Naive thymus-derived CD4-positive, alpha-beta T cell (primary cell): ENCODE measurements at regions of chr9 and their contacts with region 1.

Region 1: GRCh38 chr9:128067876-128068613 is at the start of gene SLC25A25:
- DNase-seq: peak; percentile 99 to 100 (median 100)
- ATAC-seq: peak; percentile 92
- H3K4me3 ChIP-seq: peak within 1 kb of the TSS; percentile 96
- H3K4me3 Mint-ChIP-seq: peak within 1 kb of the TSS in 8 of 10 donors; percentile 91 to 99 (median 94)
- H3K27ac ChIP-seq: peak within 1 kb of the TSS; percentile 88
- H3K27ac Mint-ChIP-seq: peak within 1 kb of the TSS; percentile 74 to 94 (median 85)
- H3K4me1 ChIP-seq: peaks cover 50 to 54% of the 10 kb centered on the region in 2 donors
- H3K4me1 Mint-ChIP-seq: peaks cover 38 to 69% (median 51%) of the 10 kb centered on the region in 7 donors
- H3K27me3 ChIP-seq: no peaks in the 10 kb centered on the region
- H3K27me3 Mint-ChIP-seq: no peaks in the 10 kb centered on the region
- total RNA-seq, gene SLC25A25: 12.4 to 26.3 (median 15.1) TPM

Region 2: DNA sequence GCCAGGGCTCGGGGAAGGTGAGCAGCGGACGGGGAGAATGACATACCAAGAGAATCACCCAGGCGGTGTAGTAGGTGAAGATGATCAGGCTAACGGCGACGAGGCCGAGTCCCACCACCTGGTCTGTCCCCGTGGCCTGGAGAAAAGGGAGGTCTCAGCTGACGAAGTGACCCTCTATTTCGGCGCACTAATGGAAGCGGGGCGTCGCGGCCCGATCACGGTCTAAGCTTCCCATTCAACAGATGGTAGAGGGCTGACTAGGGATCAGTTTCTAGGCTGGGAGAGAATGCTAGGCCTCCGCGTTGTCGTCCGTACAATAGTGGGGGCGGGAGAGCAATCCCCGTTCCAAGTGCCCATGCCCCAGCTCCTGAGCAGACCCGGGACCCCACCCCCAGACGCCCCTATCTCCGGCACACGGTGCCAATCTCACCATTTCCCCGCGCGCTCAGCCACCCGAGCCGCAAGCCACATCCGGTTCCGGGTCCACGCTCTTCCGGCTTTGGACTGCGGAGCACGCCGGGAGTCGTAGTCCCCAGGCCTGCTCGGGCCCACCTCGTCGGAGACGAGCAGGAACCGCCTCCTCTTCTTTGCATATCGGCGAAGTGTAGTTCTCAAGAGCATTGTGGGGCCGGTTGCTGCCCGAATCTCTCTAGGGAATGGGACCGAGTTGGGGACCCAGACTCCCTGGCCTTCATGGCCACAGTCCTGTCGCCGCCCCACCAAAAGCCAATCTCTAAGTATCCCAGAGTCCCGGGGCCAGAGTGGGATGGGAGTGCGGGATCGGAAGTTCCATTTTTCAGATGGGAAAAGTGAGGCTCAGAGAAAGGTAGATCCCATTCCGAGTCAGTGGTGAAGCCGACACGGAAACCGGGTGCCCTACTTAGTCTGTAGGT is 130.4 kb before region 1 on chr9 and contains the start of gene DPM2:
- CTCF ChIA-PET with region 1: no interaction called
- POLR2A ChIA-PET with region 1: interaction called, 6 read pairs
- intact Hi-C with region 1: loop called in 1 of 2 experiments (anchors 1 kb)
- DNase-seq: peak; percentile 71 to 90 (median 88)
- ATAC-seq: peak; percentile 96
- H3K4me3 ChIP-seq: peak within 1 kb of the TSS; percentile 88
- H3K4me3 Mint-ChIP-seq: peak within 1 kb of the TSS; percentile 85 to 98 (median 92)
- H3K27ac ChIP-seq: peak within 1 kb of the TSS; percentile 78
- H3K27ac Mint-ChIP-seq: peak within 1 kb of the TSS; percentile 88 to 99 (median 95)
- H3K4me1 ChIP-seq: peaks cover 24 to 25% of the 10 kb centered on the region in 2 donors
- H3K4me1 Mint-ChIP-seq: peaks cover 37 to 61% (median 48%) of the 10 kb centered on the region in 7 donors
- H3K27me3 ChIP-seq: no peaks in the 10 kb centered on the region
- H3K27me3 Mint-ChIP-seq: peaks cover 0 to 4% (median 0%) of the 10 kb centered on the region in 5 donors
- total RNA-seq, gene DPM2: 29.1 to 84.4 (median 56.8) TPM

Region 3: GRCh38 chr9:128026773-128027541 is 41.1 kb before region 1 on chr9:
- CTCF ChIA-PET with region 1: interaction called, 5 read pairs
- POLR2A ChIA-PET with region 1: interaction called, 5 read pairs
- intact Hi-C with region 1: loop called (anchors 1 kb)
- DNase-seq: peak in 8 of 9 donors; percentile 42 to 78 (median 62)
- ATAC-seq: peak; percentile 10
- H3K4me3 ChIP-seq: peak overlapping the region; percentile 52
- H3K4me3 Mint-ChIP-seq: peak overlapping the region; percentile 76 to 91 (median 85)
- H3K27ac ChIP-seq: peak overlapping the region; percentile 96
- H3K27ac Mint-ChIP-seq: peak overlapping the region; percentile 92 to 100 (median 98)
- H3K4me1 ChIP-seq: peaks cover 87 to 88% of the 10 kb centered on the region in 2 donors
- H3K4me1 Mint-ChIP-seq: peaks cover 44 to 94% (median 89%) of the 10 kb centered on the region in 7 donors
- H3K27me3 ChIP-seq: no peaks in the 10 kb centered on the region
- H3K27me3 Mint-ChIP-seq: no peaks in the 10 kb centered on the region

Region 4: DNA sequence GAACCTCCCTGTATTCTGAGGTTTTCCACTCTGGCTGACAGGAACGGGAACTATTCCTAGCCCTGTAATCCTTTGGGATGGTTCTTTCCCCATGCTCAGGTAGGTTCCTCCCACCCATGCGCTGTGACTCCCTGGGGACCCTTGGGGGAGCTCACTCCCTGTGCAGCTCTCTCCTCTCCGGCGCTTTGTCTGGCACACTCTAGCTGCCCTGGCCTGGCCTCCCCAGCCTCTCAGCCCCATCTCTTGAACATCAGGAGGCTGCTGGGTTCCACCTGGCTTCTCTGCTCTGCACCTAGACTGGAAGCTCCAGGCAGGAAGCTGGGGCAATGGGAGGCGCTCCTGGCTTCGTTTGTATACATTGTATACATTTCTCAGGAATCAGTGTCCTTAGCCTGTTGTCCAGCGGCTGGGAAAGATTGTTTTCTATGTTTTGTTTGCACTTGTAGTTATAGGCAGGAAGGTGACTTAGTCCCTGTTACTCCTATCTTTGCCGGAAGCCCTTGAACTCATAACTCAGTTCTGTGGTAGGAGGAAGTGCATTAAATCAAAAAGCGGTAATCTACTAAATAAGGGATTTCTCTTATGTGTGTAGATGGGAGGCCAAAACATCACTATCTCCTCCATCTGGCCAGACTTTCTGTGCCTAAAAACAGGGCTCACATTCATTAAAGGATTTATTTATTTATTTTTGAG is 20.4 kb after region 1 on chr9:
- CTCF ChIA-PET with region 1: interaction called, 10 read pairs
- POLR2A ChIA-PET with region 1: interaction called, 28 read pairs
- intact Hi-C with region 1: loop called in 1 of 2 experiments (anchors 1 kb)
- DNase-seq: peak in 3 of 9 donors; percentile 26 to 51 (median 36)
- ATAC-seq: peak; percentile 55
- H3K4me3 ChIP-seq: no peak overlapping the region
- H3K4me3 Mint-ChIP-seq: peak overlapping the region; percentile 20 to 80 (median 56)
- H3K27ac ChIP-seq: peak overlapping the region; percentile 53
- H3K27ac Mint-ChIP-seq: peak overlapping the region; percentile 41 to 97 (median 83)
- H3K4me1 ChIP-seq: peaks cover 16 to 52% of the 10 kb centered on the region in 2 donors
- H3K4me1 Mint-ChIP-seq: peaks cover 53 to 75% (median 61%) of the 10 kb centered on the region in 7 donors
- H3K27me3 ChIP-seq: no peaks in the 10 kb centered on the region
- H3K27me3 Mint-ChIP-seq: no peaks in the 10 kb centered on the region

Region 5: GRCh38 chr9:128117613-128118471 is 49.8 kb after region 1 on chr9:
- CTCF ChIA-PET with region 1: no interaction called
- POLR2A ChIA-PET with region 1: interaction called, 6 read pairs
- intact Hi-C with region 1: loop called in 1 of 2 experiments (anchors 2 kb)
- DNase-seq: peak; percentile 82 to 99 (median 92)
- ATAC-seq: peak; percentile 97
- H3K4me3 ChIP-seq: no peak overlapping the region
- H3K4me3 Mint-ChIP-seq: peak overlapping the region in 4 of 10 donors; percentile 3 to 59 (median 36)
- H3K27ac ChIP-seq: no peak overlapping the region
- H3K27ac Mint-ChIP-seq: peak overlapping the region in 8 of 9 donors; percentile 11 to 88 (median 60)
- H3K4me1 ChIP-seq: peaks cover 0 to 7% of the 10 kb centered on the region in 2 donors
- H3K4me1 Mint-ChIP-seq: peaks cover 6 to 13% (median 7%) of the 10 kb centered on the region in 7 donors
- H3K27me3 ChIP-seq: no peaks in the 10 kb centered on the region
- H3K27me3 Mint-ChIP-seq: no peaks in the 10 kb centered on the region

Region 6: GRCh38 chr9:128218518-128219389 is 150.7 kb after region 1 on chr9:
- CTCF ChIA-PET with region 1: no interaction called
- POLR2A ChIA-PET with region 1: no interaction called
- intact Hi-C with region 1: loop called in 1 of 2 experiments (anchors 1 kb)
- DNase-seq: peak; percentile 70 to 93 (median 89)
- ATAC-seq: peak; percentile 98
- H3K4me3 ChIP-seq: peak overlapping the region; percentile 62
- H3K4me3 Mint-ChIP-seq: peak overlapping the region; percentile 80 to 93 (median 83)
- H3K27ac ChIP-seq: peak overlapping the region; percentile 47
- H3K27ac Mint-ChIP-seq: peak overlapping the region; percentile 18 to 93 (median 65)
- H3K4me1 ChIP-seq: peaks cover 5 to 7% of the 10 kb centered on the region in 2 donors
- H3K4me1 Mint-ChIP-seq: peaks cover 9 to 13% (median 12%) of the 10 kb centered on the region in 7 donors
- H3K27me3 ChIP-seq: no peaks in the 10 kb centered on the region
- H3K27me3 Mint-ChIP-seq: peaks cover 0 to 8% (median 0%) of the 10 kb centered on the region in 5 donors

Region 7: DNA sequence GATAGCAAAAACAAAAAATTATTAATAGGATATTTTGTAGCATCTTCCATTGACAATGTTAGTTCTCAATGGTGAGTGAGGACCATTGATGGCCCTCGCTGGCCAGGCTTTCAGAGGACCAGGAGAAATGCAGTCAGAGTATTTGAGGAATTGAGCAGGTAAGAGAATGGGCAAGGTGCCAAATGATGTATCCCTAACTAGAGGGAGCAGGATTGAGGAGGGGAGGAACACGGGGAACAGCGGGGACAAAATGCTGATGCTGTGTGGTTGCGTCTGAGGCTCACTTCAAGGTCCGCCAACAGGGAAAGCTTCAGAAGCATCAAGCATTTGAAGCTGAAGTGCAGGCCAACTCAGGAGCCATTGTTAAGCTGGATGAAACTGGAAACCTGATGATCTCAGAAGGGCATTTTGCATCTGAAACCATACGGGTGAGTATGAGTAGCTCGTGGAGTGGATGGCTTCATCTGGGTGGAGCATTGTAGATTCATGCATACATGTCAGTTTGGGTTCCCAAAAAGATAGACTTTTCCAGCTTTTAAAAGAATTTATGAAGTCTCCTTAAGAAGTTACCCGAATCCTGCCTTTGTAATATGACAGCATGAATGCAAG is 500.5 kb after region 1 on chr9:
- CTCF ChIA-PET with region 1: no interaction called
- POLR2A ChIA-PET with region 1: no interaction called
- intact Hi-C with region 1: no loop called
- DNase-seq: no peak
- ATAC-seq: no peak
- H3K4me3 ChIP-seq: no peak overlapping the region
- H3K4me3 Mint-ChIP-seq: no peak overlapping the region
- H3K27ac ChIP-seq: no peak overlapping the region
- H3K27ac Mint-ChIP-seq: peak overlapping the region in 4 of 9 donors; percentile 37 to 67 (median 52)
- H3K4me1 ChIP-seq: no peaks in the 10 kb centered on the region
- H3K4me1 Mint-ChIP-seq: peaks cover 10 to 50% (median 30%) of the 10 kb centered on the region in 7 donors
- H3K27me3 ChIP-seq: no peaks in the 10 kb centered on the region
- H3K27me3 Mint-ChIP-seq: no peaks in the 10 kb centered on the region